CD8-positive, alpha-beta memory T cell (primary cell): ENCODE measurements at regions of chr10 and their contacts with region 1.

Region 1: GRCh38 chr10:101018600-101019439 is 12.1 kb downstream of the PDZD7 start:
- DNase-seq: peak; percentile 36 to 79 (median 53)
- H3K4me3 ChIP-seq: no peak overlapping the region
- H3K4me3 Mint-ChIP-seq: no peak overlapping the region
- H3K27ac ChIP-seq: no peak overlapping the region
- H3K27ac Mint-ChIP-seq: no peak overlapping the region
- H3K4me1 ChIP-seq: peaks cover 3% of the 10 kb centered on the region
- H3K4me1 Mint-ChIP-seq: peaks cover 2 to 10% (median 6%) of the 10 kb centered on the region in 3 donors
- H3K27me3 ChIP-seq: peaks cover 20% of the 10 kb centered on the region
- H3K27me3 Mint-ChIP-seq: peaks cover 36 to 52% of the 10 kb centered on the region in 2 donors

Region 2: GRCh38 chr10:101031128-101031795 is 12.4 kb after region 1 on chr10 and contains the starts of genes PDZD7 and SFXN3:
- CTCF ChIA-PET with region 1: interaction called, 20 read pairs
- POLR2A ChIA-PET with region 1: interaction called, 3 read pairs
- DNase-seq: peak; percentile 94 to 97 (median 95)
- H3K4me3 ChIP-seq: peak within 1 kb of the TSS; percentile 85
- H3K4me3 Mint-ChIP-seq: peak within 1 kb of the TSS; percentile 92 to 98 (median 93)
- H3K27ac ChIP-seq: peak within 1 kb of the TSS; percentile 94
- H3K27ac Mint-ChIP-seq: peak within 1 kb of the TSS; percentile 94 to 100 (median 98)
- H3K4me1 ChIP-seq: peaks cover 15% of the 10 kb centered on the region
- H3K4me1 Mint-ChIP-seq: peaks cover 18 to 25% (median 22%) of the 10 kb centered on the region in 3 donors
- H3K27me3 ChIP-seq: no peaks in the 10 kb centered on the region
- H3K27me3 Mint-ChIP-seq: peaks cover 3 to 5% of the 10 kb centered on the region in 2 donors
- total RNA-seq, gene PDZD7: 0.31 to 0.33 TPM
- total RNA-seq, gene SFXN3: 25.2 to 26.5 TPM

Region 3: DNA sequence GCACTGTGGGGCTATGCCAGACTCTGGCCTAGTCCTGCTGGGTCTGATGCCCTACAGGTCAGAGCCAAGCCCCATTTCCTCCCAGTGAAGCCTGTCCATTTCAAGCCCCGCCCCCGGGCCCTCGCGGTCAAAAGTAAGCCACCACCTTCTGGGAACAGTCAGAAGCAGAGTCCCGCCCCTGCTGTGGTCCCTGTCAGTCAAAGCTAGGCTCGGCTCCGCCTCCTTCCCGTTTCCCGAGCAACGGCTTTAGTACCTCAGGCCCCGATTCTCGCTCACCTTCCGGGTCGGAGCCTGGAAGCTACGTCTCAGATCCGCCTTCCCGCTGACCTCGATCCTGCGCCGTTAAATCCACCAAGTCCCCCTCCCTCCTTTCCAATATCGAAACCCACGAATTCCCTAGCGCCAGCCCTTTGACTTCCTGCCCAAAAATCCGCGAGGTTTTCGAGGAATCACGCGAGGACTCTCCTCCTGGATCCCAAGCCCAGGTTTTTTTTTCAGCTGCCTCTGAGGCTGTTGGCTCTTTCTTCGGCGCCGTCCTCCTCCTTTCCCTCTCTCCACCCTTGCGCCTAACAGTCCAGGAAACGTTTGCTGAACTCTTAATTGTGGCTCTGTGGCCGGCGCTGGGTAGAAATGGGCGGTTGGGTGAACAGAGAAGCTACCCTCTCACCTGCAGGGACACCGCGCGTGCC is 24.0 kb after region 1 on chr10:
- CTCF ChIA-PET with region 1: interaction called, 15 read pairs
- POLR2A ChIA-PET with region 1: no interaction called
- DNase-seq: peak; percentile 65 to 87 (median 67)
- H3K4me3 ChIP-seq: peak overlapping the region; percentile 67
- H3K4me3 Mint-ChIP-seq: peak overlapping the region; percentile 92 to 99 (median 97)
- H3K27ac ChIP-seq: peak overlapping the region; percentile 66
- H3K27ac Mint-ChIP-seq: peak overlapping the region; percentile 74 to 100 (median 96)
- H3K4me1 ChIP-seq: peaks cover 17% of the 10 kb centered on the region
- H3K4me1 Mint-ChIP-seq: peaks cover 20 to 27% (median 21%) of the 10 kb centered on the region in 3 donors
- H3K27me3 ChIP-seq: no peaks in the 10 kb centered on the region
- H3K27me3 Mint-ChIP-seq: peaks cover 8 to 18% of the 10 kb centered on the region in 2 donors

Region 4: DNA sequence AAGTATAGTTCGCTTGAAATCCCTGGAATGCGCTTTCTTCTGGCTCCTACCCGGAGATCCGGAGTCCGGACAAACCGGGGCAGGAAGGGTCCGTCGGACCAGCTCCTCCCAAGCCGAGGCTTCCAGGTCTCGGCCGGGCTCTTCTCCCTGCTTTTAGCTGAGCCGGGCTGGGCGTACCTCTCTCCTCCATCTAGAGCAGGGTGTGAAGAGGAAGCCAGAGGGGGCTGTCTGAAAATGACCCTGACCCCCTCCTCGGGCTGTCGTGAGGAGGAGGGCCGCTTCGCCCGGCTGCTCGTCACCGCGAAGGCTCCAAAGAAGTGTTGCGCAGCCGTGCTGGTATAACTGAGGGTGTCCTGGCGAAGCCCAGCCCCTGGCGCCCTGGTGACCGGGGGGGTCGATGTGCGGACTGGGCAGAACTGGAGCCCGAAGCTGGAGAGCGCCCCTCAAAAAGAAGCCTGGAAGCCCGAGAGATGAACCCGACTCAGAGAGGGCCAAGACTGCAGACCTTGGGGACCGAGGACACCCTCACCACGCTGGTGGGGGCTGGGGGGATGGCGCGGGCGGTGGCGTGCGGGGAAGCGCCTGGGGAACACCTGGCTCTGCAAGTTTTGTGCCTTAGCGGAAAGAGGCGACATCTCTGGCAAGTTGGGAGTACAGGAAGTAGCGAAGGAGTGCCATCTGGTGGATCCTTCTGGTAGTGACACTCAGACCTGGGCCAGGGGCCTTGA is 48.7 kb after region 1 on chr10:
- CTCF ChIA-PET with region 1: interaction called, 19 read pairs
- POLR2A ChIA-PET with region 1: no interaction called
- DNase-seq: peak; percentile 63 to 80 (median 69)
- H3K4me3 ChIP-seq: peak overlapping the region; percentile 65
- H3K4me3 Mint-ChIP-seq: peak overlapping the region; percentile 90 to 97 (median 92)
- H3K27ac ChIP-seq: peak overlapping the region; percentile 43
- H3K27ac Mint-ChIP-seq: peak overlapping the region in 3 of 8 donors; percentile 28 to 86 (median 42)
- H3K4me1 ChIP-seq: peaks cover 28% of the 10 kb centered on the region
- H3K4me1 Mint-ChIP-seq: peaks cover 10 to 35% (median 15%) of the 10 kb centered on the region in 3 donors
- H3K27me3 ChIP-seq: peaks cover 46% of the 10 kb centered on the region
- H3K27me3 Mint-ChIP-seq: peaks cover 37 to 52% of the 10 kb centered on the region in 2 donors